ENCODE measurements at regions of chr13 and their contacts with region 1.

Region 1: DNA sequence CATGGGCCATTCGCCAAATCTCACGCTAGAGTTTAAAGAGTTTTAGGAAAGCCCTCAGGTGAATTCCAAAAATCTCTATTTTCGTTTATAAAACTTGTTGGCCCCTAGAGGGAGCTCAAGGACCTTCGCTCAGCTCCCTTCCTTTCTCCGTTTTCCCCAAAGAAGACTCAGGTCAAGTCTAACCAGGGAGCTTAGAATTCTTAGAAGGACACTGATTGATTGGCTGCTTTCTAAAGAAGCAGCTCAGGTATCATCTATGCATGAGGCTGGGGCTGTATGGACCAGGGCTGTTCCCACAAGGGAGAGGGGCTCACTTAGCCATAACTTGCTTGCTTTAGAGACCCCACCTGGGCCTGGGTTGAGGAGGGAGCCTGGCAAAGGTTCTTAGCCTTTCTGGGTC is 20.5 kb downstream of the DZIP1 start:
- DNase-seq: no peak
- H3K4me3 ChIP-seq: no peak overlapping the region
- CTCF ChIP-seq: no peak
- POLR2A ChIP-seq: no peak

Region 2: DNA sequence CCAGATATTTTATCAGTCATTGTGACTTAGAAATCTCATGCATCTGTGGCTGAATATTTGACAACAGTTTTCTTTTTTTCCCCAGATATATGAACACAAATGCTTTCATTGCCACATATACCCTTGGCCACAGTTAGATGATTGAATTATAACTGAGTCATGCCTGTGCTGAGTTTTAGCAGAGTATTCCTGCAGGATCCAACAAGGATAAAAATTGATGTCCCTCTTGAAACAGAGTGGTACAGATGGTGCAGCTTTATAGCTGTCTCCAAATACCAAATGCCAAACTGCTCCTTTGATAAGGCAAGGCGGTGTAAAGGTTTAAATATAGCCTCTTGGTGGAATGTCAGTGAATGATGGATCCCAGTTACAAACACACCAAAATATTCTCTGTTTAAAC is 1968.9 kb before region 1 on chr13:
- intact Hi-C with region 1: no loop called
- DNase-seq: no peak
- H3K4me3 ChIP-seq: no peak overlapping the region
- CTCF ChIP-seq: no peak
- POLR2A ChIP-seq: no peak

Region 3: GRCh38 chr13:95834134-95834765 is 210.2 kb after region 1 on chr13:
- intact Hi-C with region 1: loop called (anchors 5 kb)
- DNase-seq: peak; percentile 39 to 91
- H3K4me3 ChIP-seq: no peak overlapping the region
- CTCF ChIP-seq: peak in 1 of 3 donors; percentile 68
- POLR2A ChIP-seq: no peak